ENCODE measurements at regions of chr11 and their contacts with region 1.

Region 1: GRCh38 chr11:13486926-13487660 is 8.7 kb downstream of the PTH start:
- DNase-seq: no peak
- ATAC-seq: peak; percentile 94
- H3K4me3 ChIP-seq: peak overlapping the region; percentile 27 to 61
- H3K27ac ChIP-seq: no peak overlapping the region
- H3K4me1 ChIP-seq: no peaks in the 10 kb centered on the region
- H3K27me3 ChIP-seq: peaks cover 9% of the 10 kb centered on the region
- CTCF ChIP-seq: peak; percentile 80

Region 2: GRCh38 chr11:13668102-13668956 is 181.2 kb after region 1 on chr11 and contains the start of gene FAR1:
- CTCF ChIA-PET with region 1: no interaction called
- POLR2A ChIA-PET with region 1: no interaction called
- in situ Hi-C with region 1: no loop called
- intact Hi-C with region 1: loop called (anchors 5 kb)
- DNase-seq: peak; percentile 91
- ATAC-seq: peak; percentile 96
- H3K4me3 ChIP-seq: peak within 1 kb of the TSS; percentile 87 to 89
- H3K27ac ChIP-seq: peak within 1 kb of the TSS; percentile 88
- H3K4me1 ChIP-seq: peaks cover 4% of the 10 kb centered on the region
- H3K27me3 ChIP-seq: peaks cover 8% of the 10 kb centered on the region
- CTCF ChIP-seq: peak; percentile 85
- total RNA-seq, gene FAR1: 60.4 TPM

Measured in Panc1 (cell line).